PC-3 (cell line): ENCODE measurements at regions of chr2 and their contacts with region 1.

Region 1: GRCh38 chr2:39845460-39846146 is 66.5 kb upstream of the THUMPD2 start:
- DNase-seq: peak; percentile 94
- ATAC-seq: peak; percentile 99
- H3K4me3 ChIP-seq: no peak overlapping the region
- H3K27ac ChIP-seq: peak overlapping the region; percentile 47
- H3K4me1 ChIP-seq: peaks cover 22% of the 10 kb centered on the region
- H3K27me3 ChIP-seq: no peaks in the 10 kb centered on the region
- CTCF ChIP-seq: no peak

Region 2: DNA sequence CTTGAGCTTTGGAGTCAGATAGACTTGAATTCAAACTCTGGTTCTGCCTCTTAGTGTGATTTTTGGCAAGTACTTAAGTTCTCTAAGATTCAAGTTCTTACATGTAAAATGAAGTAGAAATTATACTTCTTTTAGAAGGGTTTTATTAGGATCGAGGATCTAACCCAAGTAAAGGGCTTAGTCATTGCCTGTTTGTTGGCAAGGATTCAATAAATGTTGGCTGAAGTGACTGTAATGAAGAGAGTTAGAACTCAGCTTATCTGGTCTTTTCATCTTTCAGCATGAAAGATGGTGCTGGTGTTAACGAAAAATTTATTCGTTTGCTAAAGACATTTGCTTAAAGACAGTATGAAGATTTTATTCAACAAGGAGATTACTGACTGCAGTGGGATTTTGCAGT is 249.4 kb after region 1 on chr2:
- CTCF ChIA-PET with region 1: no interaction called
- POLR2A ChIA-PET with region 1: no interaction called
- intact Hi-C with region 1: loop called (anchors 10 kb)
- DNase-seq: peak; percentile 90
- ATAC-seq: peak; percentile 36
- H3K4me3 ChIP-seq: no peak overlapping the region
- H3K27ac ChIP-seq: no peak overlapping the region
- H3K4me1 ChIP-seq: peaks cover 56% of the 10 kb centered on the region
- H3K27me3 ChIP-seq: no peaks in the 10 kb centered on the region
- CTCF ChIP-seq: no peak

Region 3: DNA sequence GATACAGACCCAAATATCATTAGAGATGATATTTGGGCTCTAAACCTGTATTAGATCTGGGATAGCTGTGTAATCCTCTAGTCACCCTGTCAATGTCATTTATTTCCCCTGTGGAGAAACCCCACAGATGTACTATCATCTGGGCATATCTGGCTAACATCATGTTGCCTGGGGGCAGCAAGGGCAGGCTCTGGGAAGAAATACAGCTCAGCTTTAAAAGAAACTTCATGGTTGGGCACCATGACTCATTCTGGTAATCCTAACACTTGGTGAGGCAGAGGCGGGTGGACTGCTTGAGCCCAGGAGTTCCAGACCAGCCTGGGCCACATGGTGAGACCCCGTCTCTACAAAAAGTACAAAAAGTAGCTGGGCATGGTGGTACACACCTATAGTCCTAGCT is 323.8 kb after region 1 on chr2:
- CTCF ChIA-PET with region 1: no interaction called
- POLR2A ChIA-PET with region 1: no interaction called
- intact Hi-C with region 1: no loop called
- DNase-seq: peak; percentile 13
- ATAC-seq: no peak
- H3K4me3 ChIP-seq: no peak overlapping the region
- H3K27ac ChIP-seq: no peak overlapping the region
- H3K4me1 ChIP-seq: no peaks in the 10 kb centered on the region; the same call in 1 of the 2 replicates
- H3K27me3 ChIP-seq: no peaks in the 10 kb centered on the region
- CTCF ChIP-seq: no peak